PC-9 (cell line): ENCODE measurements at regions of chr3 and their contacts with region 1.

Region 1: DNA sequence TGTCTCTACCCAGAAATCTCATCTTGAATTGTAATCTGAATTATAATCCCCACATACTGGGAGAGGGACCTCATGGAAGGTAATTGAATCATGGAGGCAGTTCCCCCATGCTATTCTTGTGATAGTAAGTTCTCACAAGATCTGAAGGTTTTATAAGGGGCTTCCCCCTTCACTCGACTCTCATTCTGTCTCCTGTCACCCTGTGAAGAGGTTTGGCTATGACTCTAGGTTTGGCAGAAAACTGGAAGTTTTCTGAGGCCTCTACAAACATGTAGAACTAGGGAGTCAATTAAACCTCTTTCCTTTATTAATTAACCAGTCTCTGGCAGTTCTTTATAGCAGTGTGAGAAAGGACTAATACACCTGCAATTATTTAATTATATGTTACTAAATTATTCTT is 125.2 kb upstream of the TGFBR2 start:
- DNase-seq: no peak
- H3K4me3 ChIP-seq: no peak overlapping the region
- H3K27ac ChIP-seq: no peak overlapping the region
- H3K4me1 ChIP-seq: peaks cover 9% of the 10 kb centered on the region; the same call in 1 of the 2 replicates
- H3K27me3 ChIP-seq: no peaks in the 10 kb centered on the region
- CTCF ChIP-seq: no peak

Region 2: DNA sequence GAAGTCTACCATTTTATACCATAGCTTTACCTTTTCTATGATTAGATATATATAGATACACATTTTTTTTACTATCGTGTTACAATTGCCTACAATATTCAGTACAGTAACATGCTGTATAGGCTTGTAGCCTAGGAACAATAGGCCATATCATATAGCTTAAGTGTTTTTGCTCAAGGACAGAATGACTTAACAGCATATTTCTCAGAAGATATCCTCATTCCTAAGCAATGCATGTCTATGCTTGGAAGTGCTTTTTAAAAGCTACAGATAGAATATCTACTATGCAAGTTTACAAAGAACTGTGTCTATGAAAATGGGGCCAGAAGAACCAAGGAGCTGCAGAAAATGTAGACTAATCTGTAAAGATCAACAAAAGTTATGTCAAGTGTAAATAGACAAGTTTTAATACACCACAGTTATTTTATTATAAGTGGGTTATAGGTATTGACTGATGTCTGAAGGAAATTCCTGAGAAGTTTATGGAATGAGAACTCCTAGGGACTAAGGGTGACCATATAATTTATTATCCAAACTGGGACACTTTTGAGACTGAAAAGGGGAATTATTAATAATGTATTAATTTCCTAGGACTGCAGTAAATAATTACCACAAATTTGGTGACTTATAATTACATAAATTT is 13.5 kb before region 1 on chr3:
- CTCF ChIA-PET with region 1: no interaction called
- POLR2A ChIA-PET with region 1: interaction called, 18 read pairs
- intact Hi-C with region 1: no loop called
- DNase-seq: no peak
- H3K4me3 ChIP-seq: no peak overlapping the region
- H3K27ac ChIP-seq: no peak overlapping the region
- H3K4me1 ChIP-seq: no peaks in the 10 kb centered on the region
- H3K27me3 ChIP-seq: no peaks in the 10 kb centered on the region
- CTCF ChIP-seq: no peak

Region 3: DNA sequence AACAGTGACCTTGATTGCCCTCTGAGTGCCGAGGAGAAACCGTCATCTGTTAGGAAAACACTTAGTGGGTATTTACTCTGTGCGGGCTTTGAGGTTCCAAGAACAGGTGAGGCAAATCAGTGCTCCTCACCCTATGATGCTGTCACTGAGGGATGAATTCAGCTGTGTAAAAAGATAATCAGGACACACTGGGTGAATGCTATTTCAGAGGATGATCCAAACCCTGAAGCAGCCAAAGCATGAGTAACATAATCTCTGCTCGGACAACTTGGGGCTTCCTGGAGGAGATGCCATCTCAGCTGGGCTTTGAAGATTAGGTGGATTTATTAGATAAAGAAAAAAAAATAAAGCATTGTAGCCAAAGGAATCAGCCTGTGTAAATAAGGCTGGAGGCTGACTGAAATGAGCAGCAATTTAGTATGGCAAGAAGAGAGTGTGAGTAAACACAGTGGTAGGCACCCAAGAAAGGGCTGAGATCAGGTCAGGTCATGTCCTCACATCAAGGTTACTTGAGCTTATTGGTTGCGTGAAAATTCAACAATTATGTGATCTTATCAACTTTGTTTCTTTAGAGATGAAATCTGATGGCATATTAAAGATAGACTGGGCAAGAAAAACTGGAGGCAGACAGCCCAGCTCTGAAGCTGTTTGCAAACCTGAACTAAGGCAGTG is 423.9 kb after region 1 on chr3:
- CTCF ChIA-PET with region 1: no interaction called
- POLR2A ChIA-PET with region 1: no interaction called
- intact Hi-C with region 1: no loop called
- DNase-seq: no peak
- H3K4me3 ChIP-seq: no peak overlapping the region
- H3K27ac ChIP-seq: no peak overlapping the region
- H3K4me1 ChIP-seq: no peaks in the 10 kb centered on the region
- H3K27me3 ChIP-seq: no peaks in the 10 kb centered on the region
- CTCF ChIP-seq: no peak